Activated CD4-positive, alpha-beta T cell treated with anti-CD3 and anti-CD28 coated beads, Interleukin-2, amount 10 ng/mL, durations not matched to agents 7 days and 5 days (primary cell): ENCODE measurements at regions of chr19 and their contacts with region 1.

Region 1: GRCh38 chr19:10416380-10417257 is 3.7 kb upstream of the PDE4A start:
- DNase-seq: peak; percentile 93
- H3K4me3 Mint-ChIP-seq: peak overlapping the region; percentile 66
- H3K27ac Mint-ChIP-seq: peak overlapping the region; percentile 89
- H3K4me1 Mint-ChIP-seq: peaks cover 67% of the 10 kb centered on the region
- H3K27me3 Mint-ChIP-seq: peaks cover 38% of the 10 kb centered on the region

Region 2: DNA sequence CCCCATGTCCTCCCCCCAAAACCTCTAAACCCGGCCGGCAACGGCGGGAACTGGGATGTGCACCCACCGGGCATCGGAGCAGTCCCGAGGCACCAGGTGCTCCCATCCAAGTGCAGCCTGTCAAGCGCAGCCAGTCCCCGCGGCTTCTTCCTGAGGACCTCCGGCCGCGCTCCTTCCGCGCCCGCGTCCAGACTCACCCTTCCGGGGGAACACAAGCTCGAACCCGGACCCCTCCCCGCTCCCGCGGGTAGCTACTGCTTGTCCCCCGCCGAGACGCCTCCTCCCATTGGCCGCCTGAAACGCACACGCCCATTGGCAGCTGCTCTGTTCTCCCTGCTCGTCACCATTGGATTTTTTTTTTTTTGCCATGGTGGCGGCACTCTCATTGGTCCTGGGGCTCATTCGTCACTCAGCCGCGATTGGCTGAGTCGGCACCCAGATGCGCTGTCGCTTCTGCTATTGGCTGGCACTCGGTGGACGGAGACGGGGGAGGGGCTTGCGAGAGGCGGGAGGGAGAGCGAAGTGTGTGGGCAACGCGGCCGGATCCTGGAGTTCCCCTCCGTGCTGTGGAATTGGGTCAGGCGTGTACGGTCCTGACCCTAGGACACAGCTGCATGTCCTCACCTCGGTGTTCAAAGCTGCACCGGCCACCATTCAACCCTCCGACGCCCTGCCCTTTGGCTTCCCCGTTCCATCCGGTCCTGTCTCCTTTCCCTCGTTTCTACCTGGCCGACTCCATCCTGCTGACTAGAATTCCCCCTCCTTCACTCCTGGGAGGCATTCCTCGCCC is 36.1 kb before region 1 on chr19 and contains the start of gene TYK2:
- CTCF ChIA-PET with region 1: interaction called, 11 read pairs
- POLR2A ChIA-PET with region 1: no interaction called
- DNase-seq: peak; percentile 97
- H3K4me3 Mint-ChIP-seq: peak within 1 kb of the TSS; percentile 85
- H3K27ac Mint-ChIP-seq: peak within 1 kb of the TSS; percentile 94
- H3K4me1 Mint-ChIP-seq: peaks cover 21% of the 10 kb centered on the region
- H3K27me3 Mint-ChIP-seq: no peaks in the 10 kb centered on the region
- total RNA-seq, gene TYK2: 251 to 263 TPM

Region 3: DNA sequence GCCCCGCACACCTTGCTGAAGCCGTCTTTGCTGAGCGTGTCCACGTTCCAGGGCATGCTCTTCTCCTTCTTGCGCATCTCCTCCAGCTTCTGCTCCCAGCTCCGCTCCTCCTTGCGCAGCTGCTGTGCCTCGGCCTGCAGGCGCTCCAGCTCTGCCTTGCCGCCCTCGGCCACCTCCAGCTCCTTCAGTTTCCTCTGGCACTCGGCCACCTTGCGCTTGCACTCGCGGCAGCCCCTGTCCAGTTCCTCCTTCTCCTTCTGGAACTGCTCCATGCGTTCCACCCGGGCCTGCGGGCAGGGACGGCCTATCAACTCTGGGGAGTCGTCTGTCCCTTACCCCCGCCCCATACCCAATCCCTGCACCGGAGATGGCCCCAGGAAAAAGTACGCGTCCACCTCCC is 20.7 kb before region 1 on chr19:
- CTCF ChIA-PET with region 1: interaction called, 612 read pairs
- POLR2A ChIA-PET with region 1: interaction called, 4 read pairs
- DNase-seq: no peak
- H3K4me3 Mint-ChIP-seq: no peak overlapping the region
- H3K27ac Mint-ChIP-seq: no peak overlapping the region
- H3K4me1 Mint-ChIP-seq: peaks cover 20% of the 10 kb centered on the region
- H3K27me3 Mint-ChIP-seq: no peaks in the 10 kb centered on the region

Region 4: DNA sequence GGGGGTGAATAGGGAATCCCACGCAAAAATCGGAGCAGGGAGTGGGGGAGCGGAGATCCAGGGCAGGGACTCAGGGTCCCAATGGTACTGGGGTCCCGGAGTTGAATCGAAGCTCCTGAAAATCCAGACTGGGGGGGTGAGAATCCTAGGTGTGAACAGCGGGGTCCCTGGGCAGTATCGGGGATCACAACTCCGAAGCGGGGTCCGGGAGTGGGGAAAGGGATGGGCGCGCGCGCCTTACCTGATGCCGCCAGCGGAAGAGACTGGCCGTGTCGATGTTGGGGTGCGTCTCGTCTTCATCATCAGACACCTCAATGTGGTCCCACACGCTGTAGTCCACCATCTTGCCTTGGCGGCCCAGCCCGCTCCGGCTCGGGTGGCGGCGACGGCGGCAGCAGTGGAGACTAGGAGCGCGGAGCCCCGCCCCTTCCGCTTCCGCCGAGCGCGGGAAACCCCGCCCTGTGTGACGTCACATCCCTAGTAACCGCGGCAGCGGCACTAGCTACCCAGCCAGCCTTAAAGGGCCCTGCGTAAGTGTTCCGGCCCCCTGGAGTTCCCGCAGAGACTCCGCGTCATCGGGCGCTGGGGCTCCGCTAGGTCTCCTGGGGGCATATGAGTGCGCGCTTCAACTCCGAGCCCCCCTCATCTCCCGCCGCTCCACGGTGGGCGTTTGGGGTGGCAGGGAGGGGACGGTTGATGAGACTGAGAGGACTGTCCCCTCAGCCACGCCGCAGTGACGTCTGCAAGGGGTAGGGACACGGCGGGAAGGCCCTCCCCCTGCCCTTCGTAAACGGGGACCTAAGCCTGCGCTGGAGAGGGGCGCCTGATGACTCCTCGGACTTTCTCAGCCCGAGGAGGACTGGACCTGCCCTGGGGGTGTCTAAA is 13.2 kb before region 1 on chr19 and contains the start of gene CDC37:
- CTCF ChIA-PET with region 1: interaction called, 612 read pairs
- POLR2A ChIA-PET with region 1: interaction called, 4 read pairs
- DNase-seq: peak; percentile 97
- H3K4me3 Mint-ChIP-seq: peak within 1 kb of the TSS; percentile 97
- H3K27ac Mint-ChIP-seq: peak within 1 kb of the TSS; percentile 92
- H3K4me1 Mint-ChIP-seq: peaks cover 69% of the 10 kb centered on the region
- H3K27me3 Mint-ChIP-seq: no peaks in the 10 kb centered on the region
- total RNA-seq, gene CDC37: 200 to 205 TPM

Region 5: DNA sequence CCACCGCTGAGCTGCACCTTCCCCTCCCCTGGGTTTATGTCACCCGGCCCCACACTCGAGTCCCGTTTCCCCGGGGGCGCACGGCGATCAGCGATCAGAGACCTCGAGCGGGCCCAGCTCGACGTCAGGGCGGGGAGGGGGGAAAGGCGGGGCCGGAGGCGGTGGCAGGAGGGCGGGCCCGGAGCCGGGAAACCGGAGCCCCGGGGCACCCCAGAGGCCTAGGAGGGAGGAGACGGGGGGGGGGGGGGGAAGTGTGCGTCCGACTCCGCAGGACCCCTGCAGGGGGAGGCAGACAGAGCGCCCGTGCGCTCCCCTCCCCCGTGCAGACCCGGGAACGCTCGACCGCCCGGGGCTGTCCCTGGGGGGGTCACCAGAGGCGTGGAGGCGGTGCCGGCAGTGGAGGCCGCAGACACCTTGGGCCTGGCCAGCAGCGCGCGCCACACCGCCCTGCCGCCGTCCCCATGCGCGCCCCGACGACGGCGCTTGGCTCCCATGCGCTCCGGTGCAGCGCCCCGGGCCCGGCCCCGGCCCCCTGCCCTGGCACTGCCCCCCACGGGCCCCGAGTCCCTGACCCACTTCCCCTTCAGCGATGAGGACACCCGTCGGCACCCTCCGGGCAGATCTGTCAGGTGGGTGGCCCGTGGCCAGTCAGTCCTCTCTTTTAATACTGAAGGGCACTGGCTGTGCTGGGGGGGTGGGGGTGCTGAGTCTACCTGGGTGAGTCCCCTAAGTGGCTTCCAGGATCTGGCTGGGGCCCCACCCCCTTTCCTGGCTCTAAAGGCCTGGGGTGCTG is 15.5 kb after region 1 on chr19:
- CTCF ChIA-PET with region 1: interaction called, 612 read pairs
- POLR2A ChIA-PET with region 1: interaction called, 5 read pairs
- DNase-seq: peak; percentile 63
- H3K4me3 Mint-ChIP-seq: peak overlapping the region; percentile 72
- H3K27ac Mint-ChIP-seq: peak overlapping the region; percentile 72
- H3K4me1 Mint-ChIP-seq: peaks cover 55% of the 10 kb centered on the region
- H3K27me3 Mint-ChIP-seq: peaks cover 37% of the 10 kb centered on the region